ENCODE measurements at regions of chr2 and their contacts with region 1.

Region 1: GRCh38 chr2:96760036-96760985 is at the start of gene CNNM4:
- DNase-seq: peak; percentile 89
- H3K4me3 Mint-ChIP-seq: peak within 1 kb of the TSS; percentile 92
- H3K27ac Mint-ChIP-seq: peak within 1 kb of the TSS; percentile 88
- H3K4me1 Mint-ChIP-seq: peaks cover 54% of the 10 kb centered on the region
- H3K27me3 Mint-ChIP-seq: no peaks in the 10 kb centered on the region
- total RNA-seq, gene CNNM4: 9.9 and 11.1 TPM in 2 replicates

Region 2: DNA sequence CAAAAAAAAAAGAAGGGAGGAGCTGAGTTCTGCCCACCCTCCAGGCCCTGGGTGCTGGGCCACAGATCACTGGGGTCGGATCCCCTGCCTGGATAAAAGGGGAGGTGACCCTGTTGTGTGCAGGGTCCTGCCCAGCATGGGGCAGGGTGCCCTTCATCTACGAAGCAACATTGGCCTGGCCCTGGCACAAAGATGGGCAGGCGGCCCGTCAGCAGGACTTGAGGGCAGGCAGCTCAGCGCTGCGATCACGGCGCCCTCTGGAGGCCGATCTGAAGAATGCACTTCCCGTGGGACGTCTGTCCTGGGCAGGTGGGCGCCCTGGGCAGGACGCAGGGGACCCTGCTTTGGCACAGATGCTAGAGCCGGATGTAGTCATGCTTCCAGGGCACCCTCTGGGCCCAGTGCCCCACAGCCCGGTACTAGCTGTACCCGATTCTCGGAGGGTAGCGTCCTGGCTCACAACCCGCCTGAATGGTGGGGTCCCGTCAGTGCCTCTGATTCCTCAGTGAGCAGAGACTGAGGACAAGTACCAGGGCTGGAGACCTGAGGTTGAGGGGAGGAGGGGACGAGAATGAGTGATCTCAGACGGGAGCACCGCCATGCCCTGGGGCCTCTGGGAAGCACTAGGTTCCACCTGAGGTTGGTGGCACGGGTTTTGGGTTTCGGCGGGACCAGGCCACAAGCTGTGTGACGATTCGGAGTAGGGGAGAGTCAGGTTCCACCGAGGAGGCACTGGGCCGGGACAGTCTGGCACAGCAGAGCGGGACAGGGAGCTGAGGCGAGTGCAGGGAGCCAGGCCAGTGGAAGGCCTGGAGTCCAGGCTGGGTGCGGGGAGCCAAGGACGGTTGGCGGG is 205.8 kb before region 1 on chr2:
- intact Hi-C with region 1: loop called (anchors 5 kb)
- DNase-seq: peak; percentile 56
- H3K4me3 Mint-ChIP-seq: no peak overlapping the region
- H3K27ac Mint-ChIP-seq: peak overlapping the region; percentile 34
- H3K4me1 Mint-ChIP-seq: peaks cover 23% of the 10 kb centered on the region
- H3K27me3 Mint-ChIP-seq: no peaks in the 10 kb centered on the region

Region 3: DNA sequence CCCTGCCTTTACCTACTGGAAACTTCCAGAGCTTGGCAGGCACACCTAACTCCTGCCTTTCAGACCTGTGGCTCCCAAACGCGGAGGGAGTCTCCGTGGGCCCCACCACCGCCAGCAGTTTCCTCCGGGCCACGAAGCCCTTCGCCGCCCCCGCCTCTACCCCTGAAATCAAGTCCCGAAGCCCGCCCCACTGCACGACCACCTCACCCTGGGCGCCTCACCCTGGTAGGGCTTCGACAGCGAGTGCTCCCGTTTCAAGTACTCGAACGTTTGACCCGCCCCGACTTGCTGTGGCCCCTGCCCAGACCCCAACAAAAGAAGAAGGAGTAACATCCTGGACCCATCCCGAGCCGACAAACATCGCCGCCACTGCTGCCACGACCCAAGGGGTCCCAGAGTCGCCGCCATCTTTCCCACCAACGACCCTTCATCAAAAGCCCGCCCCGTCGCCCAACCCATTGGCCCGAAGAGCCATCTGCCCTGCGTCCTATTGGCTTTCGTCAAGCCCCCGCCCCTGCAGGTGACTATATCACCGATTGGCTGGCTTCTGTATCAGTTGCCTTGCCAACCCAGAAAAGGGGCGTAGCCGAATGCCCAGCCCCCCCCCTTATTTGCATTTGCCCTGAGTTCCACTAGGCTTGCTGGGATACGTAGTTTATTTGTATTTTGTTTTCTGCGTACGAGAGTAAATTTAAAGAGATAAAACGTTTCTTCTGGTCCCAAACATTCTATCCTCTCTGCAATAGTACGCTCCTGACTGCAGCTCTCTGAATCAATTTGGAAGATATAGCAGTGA is 20.5 kb before region 1 on chr2 and contains the start of gene LMAN2L:
- intact Hi-C with region 1: loop called (anchors 1 kb)
- DNase-seq: peak; percentile 94
- H3K4me3 Mint-ChIP-seq: peak within 1 kb of the TSS; percentile 90
- H3K27ac Mint-ChIP-seq: peak within 1 kb of the TSS; percentile 77
- H3K4me1 Mint-ChIP-seq: peaks cover 32% of the 10 kb centered on the region
- H3K27me3 Mint-ChIP-seq: no peaks in the 10 kb centered on the region
- total RNA-seq, gene LMAN2L: 5.6 and 6.0 TPM in 2 replicates

Region 4: DNA sequence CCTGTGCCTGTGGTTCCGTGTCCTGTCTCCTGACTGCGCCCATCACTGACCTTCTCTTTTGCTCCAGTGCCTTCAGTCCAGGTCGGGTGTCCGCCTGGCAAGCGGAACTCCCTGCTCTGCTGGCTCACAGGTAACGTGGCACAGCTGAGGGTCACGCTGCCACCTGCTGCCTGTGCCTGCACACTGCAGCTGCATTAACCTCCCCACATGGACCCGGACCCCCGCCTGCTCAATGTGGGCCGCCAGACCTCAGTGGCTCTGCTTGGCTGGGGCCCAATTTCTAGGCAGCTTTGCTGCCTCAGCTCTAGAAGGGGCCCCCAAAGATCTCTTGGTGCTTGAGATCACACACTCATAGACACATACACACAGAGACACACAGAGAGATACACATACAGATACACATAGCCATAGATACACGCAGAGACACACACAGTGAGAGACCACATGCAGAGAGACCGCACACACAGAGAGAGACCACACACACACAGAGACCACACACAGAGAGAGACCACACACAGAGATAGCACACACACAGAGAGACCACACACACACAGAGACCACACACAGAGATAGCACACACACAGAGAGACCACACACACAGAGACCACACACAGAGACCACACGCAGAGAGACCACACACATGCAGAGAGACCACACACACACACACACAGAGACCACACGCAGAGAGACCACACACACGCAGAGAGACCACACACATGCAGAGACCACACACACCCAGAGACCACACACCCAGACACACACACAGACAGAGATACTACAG is 40.9 kb after region 1 on chr2:
- intact Hi-C with region 1: loop called (anchors 1 kb)
- DNase-seq: peak; percentile 49
- H3K4me3 Mint-ChIP-seq: no peak overlapping the region
- H3K27ac Mint-ChIP-seq: no peak overlapping the region
- H3K4me1 Mint-ChIP-seq: peaks cover 2% of the 10 kb centered on the region
- H3K27me3 Mint-ChIP-seq: no peaks in the 10 kb centered on the region

Region 5: DNA sequence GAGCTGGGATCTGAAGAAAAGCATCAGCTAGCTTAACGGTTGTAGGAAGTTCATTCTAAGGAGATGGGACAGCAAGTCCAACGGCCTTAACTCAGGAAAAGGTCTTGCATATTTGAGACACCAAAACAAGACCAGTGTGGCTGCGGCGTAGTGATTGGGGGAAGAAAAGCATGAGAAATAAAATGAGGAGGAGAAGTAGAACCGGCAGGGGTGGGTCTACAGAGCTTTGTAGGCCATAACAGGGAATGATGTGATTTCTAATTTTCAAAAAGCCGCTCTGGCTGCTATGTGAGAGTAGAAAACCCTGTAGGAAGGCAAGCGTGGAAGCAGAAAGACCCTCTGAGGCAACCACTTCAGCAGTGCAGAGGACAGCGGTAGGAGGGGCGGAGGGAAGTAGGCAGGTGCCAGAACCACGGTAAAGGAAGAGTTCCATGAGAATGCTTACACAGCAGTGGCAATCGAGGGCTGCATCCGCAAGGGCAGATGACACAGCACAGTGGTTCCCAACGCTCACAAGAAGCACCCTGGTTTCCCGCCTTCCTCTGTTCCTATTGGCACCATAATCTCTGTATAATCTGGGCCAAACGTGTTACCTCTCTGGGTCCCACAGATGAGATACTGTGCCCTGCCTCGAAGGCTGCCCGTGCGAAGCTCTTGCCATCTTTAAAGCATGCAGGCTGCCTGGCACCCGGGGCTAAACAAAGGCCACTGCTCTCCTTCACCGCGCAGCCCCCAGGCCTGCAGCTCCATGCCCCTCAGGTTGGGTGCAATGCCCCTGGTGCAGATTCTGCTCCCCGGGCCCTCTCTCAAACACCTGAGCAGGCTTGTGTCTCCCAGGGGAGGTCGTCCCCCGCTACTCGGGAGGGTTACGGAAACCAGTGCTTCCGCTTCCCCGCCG is 96.7 kb after region 1 on chr2:
- intact Hi-C with region 1: loop called (anchors 5 kb)
- DNase-seq: no peak
- H3K4me3 Mint-ChIP-seq: peak overlapping the region; percentile 85
- H3K27ac Mint-ChIP-seq: peak overlapping the region; percentile 88
- H3K4me1 Mint-ChIP-seq: peaks cover 26% of the 10 kb centered on the region
- H3K27me3 Mint-ChIP-seq: no peaks in the 10 kb centered on the region